Cardiac septum (tissue), 1 donor: ENCODE measurements at regions of chr6 and their contacts with region 1.

Region 1: GRCh38 chr6:35240840-35241801 is 18.4 kb upstream of the ZNF76 start:
- DNase-seq: peak; percentile 86

Region 2: GRCh38 chr6:34986845-34987246 is 254.3 kb before region 1 on chr6:
- intact Hi-C with region 1: loop called (anchors 5 kb)
- DNase-seq: no peak

Region 3: GRCh38 chr6:35146453-35146852 is 94.7 kb before region 1 on chr6:
- intact Hi-C with region 1: loop called (anchors 2 kb)
- DNase-seq: no peak

Region 4: GRCh38 chr6:35165630-35166071 is 75.5 kb before region 1 on chr6:
- intact Hi-C with region 1: no loop called
- DNase-seq: no peak

Region 5: DNA sequence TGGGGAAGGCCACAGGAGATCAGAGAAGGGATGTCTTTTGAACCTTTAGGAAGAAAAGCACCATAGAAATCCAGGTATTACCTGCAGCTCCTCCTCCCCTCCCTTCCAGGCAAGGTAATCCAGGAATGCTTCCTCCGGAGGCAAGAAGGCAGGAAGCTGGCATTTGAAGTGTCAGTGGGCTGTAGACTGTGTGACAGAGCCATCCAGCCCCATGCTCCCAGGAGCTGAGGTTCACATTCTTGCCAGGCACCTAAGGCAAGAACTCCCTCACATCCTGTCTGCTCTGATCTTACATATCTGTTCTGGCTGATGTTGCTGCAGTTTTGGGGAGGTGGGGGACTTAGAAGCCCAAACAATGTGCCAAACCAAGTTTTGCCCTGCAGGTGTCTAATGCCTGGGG is 55.1 kb before region 1 on chr6:
- intact Hi-C with region 1: loop called (anchors 1 kb)
- DNase-seq: no peak

Region 6: GRCh38 chr6:35209081-35209480 is 32.0 kb before region 1 on chr6:
- intact Hi-C with region 1: loop called (anchors 5 kb)
- DNase-seq: no peak

Region 7: DNA sequence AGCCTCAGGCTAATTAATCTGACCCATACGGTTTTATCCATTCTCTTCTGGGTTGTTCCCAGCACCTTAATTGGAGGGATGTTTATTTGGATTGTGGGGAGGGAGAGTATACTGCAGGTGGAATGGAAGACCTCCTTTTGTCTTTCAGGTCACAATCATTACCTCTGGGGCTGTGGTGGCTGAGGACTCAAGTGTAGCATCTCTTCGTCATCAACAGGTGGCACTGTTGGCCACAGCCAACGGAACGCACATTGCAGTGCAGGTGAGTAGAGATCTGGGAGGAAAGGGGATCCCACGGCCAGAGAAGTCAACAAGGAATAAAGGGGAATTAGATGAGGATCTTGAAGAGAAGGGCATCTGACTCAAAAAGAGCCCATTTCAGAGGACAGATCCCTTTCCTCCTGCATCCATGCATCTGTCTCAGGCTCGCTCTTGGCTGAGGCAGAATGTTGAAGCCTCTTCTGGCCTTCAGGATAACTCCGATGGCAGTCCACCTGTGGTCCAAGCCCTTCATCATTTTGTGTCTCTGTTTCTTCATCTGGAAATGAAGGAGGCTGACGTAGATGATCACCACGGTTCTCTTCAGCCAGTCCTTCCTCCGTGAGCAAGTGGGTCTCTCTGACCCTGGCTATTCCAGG is 53.3 kb after region 1 on chr6:
- intact Hi-C with region 1: no loop called
- DNase-seq: peak; percentile 73